ENCODE measurements at regions of chr22 and their contacts with region 1.

Region 1: DNA sequence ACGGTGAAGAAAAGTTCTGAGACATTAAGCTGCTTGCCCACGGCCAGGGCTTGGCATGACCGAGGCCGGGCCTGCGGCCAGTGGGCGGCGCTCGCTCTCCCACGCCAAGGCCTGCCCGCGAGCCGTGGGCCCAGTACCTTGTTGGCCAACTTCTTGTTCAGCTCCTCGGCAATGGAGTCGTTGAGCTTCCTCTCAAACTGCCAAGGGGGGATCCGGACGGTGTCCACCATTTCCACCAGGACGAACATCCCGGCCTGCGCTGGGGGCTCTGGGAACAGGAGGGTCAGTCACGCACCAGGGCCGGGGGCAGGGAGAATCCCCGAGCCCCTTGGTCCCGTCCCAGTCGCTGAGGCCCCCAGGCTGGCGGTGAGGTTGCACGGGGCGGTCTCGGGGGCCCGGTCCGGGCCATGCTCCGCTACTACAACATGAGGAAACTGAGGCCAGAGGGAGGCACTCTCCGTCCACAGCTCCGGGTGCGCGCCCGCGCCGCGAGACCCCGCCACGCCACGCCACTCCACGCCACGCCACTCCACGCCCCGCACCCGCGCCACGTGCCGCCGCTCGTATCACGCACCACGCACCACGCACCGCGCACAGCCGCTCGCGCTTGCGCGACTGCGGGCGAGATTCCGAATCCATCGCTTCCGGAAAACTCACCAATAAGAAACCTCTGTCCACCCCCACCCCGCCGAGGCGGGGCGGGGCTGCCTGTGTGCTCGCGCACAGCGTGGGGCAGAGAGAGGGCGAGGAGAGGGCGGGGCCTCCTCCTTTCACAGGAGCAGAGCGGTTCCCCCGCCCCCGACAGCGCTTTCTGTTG is at the start of gene POLR3H:
- DNase-seq: peak; percentile 100
- CTCF ChIP-seq: peak; percentile 89

Region 2: DNA sequence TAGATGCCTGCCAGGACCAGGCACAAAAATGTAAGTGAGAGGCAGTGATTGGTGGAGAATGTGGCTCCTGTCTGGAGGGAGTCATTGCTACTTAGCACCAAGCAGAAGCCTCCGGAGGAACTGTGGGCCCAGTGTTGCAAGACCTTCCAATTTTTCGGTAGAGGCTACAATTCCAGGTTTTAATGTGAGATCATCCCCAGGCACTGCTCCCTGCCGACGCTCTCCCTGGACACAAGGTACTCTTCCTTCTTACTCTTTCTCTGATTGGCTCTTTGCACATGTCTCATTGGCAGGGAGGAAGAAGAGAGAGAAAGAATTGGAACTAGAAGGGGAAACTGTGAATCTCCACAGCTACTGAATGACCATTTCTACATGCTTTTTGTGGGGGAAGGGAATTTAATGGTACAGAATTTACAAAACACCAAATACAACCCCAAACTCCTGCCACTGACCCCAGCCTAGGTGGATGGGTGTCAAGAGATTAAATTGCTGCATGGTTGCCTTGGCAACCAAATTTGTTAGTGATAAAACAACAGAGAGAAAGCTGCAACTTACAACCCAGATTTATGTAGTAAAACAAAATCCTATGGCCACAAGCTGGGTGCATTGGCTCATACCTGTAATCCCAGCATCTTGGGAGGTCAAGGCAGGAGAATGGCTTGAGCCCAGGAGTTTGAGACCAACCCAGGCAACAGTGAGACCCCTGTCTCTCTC is 505.2 kb before region 1 on chr22:
- CTCF ChIA-PET with region 1: no interaction called
- POLR2A ChIA-PET with region 1: no interaction called
- DNase-seq: no peak
- CTCF ChIP-seq: no peak

Region 3: DNA sequence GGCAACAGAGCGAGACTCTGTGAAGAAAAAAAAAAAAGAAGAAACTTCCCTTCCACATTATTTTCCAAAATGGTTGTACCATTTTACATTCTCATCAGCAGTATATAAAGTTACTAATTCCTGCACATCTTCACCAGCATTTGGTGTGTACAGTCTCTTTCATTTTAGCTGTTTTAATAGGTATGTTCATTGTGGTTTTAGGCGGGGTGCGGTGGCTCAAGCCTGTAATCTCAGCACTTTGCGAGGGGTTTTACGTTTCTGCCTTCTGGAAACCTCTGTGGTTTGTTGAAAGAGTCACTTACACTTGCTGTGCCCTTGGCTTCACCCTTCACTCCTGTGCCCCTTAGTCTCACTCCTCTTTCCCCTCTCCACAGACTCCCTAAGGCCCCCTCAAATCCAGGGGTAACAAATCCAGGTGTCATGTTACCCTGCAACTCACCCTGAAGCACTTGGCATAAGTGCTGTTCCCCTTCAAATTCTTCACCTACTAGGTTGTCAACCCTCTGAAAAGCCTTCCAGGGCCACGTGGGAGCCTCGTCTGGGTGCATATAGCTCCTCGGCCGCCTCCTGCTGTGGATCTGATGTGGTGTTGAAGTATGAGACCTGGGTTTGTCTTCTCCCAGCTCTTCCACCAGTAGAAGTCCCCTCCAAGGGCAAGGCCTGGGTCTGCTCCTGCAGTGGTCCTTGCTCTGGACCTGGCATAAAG is 118.2 kb before region 1 on chr22:
- CTCF ChIA-PET with region 1: no interaction called
- POLR2A ChIA-PET with region 1: no interaction called
- DNase-seq: no peak
- CTCF ChIP-seq: no peak

Region 4: DNA sequence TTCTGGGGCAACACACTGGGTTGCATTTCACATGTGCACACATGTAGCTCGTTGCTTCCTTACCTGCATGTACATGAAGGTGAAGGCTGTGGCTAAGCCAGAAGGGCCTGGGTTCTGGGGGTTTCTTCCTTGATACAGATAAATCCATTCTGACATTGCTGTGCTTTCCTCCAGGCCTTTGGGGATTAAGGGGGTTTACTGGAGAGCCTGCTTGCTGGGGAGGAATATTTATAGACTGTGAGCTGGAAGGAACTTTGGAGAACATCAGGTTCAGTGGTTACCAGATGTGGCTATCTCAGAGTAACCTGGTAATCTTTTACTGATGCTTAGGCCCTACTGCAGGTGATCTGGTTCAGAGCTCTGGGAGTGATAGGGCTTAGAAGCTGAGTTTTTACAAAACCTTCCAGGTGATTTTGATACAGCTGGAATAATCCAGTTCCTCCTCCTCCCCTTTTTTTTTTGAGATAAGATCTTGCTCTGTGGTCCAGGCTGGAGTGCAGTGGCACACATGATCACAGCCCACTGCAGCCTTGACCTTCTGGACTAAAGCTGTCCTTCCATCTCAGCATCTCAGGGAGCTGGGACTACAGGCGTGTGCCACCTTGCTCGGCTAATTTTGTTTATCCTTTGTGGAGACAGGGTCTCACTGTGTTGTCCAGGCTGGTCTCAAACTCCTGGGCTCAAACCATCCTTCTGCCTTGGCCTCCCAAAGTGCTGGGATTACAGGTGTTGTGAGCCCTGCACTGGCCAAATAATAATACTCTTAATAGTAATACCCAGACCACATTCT is 55.3 kb before region 1 on chr22:
- CTCF ChIA-PET with region 1: no interaction called
- POLR2A ChIA-PET with region 1: no interaction called
- DNase-seq: no peak
- CTCF ChIP-seq: no peak

Region 5: DNA sequence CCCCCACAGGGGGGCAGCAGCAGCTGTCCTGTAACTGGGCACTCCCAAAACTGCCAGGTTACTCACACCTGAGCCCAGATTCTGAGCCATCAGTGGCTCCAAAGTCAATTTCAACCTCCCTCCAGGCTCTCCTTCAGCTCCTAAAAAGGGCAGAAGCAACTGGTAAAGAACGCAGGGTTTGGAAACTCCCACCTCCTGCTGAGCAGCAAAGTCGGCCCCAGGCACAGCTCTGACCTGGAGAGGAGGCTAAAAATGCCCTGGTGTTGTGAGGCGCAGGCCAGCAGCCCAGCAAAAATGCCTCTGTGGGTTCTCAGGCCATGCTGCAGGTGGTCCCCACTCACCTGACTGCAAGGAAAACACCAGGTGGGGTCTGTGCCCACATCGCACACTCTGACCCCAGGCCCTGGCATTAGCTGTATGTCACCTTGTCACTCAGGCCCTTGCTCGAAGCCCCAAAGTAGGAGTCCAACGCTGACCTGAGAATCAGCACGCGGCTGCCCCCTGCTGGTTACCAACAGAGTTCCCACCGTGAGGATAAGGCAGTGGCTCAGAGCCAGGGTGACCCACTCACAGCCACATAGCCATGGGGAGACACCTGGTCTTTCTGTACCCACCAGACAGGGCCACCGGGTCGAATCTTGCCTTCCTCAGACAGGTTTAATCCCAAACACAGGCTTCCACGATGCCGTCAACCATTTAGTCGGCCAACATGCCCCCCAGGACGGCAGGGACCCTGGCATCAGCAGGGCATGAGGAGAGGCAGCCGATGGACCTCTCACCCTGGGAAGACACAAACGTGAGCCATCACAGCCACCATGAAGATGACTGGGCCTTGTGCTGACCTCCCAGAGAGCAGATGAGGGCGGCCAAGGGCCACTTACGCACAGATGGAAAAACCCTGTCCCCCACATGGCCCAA is 10.9 kb before region 1 on chr22:
- CTCF ChIA-PET with region 1: interaction called, 18 read pairs
- POLR2A ChIA-PET with region 1: interaction called, 3 read pairs
- DNase-seq: peak; percentile 81
- CTCF ChIP-seq: peak; percentile 83